ENCODE measurements at regions of chr19 and their contacts with region 1.

Region 1: DNA sequence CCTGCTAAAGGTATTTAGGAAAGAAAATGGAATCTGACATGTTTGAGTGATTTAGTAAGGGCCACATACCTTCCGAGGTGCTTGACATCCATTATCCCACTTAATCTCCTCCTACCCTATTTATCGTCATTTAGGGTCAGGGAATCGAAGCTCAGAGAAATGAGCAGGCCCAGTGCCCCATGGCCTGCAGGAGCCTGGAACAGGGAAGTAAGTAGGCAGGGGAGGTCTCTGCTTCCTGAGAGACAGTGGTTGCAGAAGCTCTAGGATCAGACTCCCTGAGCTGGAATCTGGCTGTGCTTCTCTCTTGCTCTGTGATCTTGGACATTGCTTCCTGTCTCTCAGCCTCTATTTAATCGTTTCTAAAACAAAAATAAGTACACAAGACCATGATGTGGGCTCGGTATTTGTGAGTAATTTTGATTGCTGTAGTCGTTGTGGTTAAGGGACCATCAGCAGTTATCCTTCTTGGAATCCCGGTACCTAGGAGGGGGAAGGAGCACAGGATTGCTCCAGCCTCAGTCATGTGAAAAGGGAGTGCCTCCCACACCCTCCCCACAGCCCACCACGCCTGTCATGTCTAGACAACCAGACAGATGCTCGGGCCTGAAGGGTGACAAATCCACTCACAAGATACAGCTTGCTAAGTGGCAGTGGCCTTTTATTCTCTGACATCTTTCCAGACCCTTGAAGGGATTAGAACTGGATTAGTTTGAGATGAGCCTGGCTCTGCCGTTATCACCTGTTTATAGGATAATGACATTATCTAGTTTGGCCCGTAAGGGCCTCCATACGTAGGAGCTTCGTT is 169.2 kb upstream of the TSHZ3 start:
- DNase-seq: no peak
- H3K4me3 ChIP-seq: no peak overlapping the region
- H3K27ac ChIP-seq: no peak overlapping the region
- H3K4me1 ChIP-seq: no peaks in the 10 kb centered on the region
- H3K27me3 ChIP-seq: no peaks in the 10 kb centered on the region
- CTCF ChIP-seq: no peak

Region 2: DNA sequence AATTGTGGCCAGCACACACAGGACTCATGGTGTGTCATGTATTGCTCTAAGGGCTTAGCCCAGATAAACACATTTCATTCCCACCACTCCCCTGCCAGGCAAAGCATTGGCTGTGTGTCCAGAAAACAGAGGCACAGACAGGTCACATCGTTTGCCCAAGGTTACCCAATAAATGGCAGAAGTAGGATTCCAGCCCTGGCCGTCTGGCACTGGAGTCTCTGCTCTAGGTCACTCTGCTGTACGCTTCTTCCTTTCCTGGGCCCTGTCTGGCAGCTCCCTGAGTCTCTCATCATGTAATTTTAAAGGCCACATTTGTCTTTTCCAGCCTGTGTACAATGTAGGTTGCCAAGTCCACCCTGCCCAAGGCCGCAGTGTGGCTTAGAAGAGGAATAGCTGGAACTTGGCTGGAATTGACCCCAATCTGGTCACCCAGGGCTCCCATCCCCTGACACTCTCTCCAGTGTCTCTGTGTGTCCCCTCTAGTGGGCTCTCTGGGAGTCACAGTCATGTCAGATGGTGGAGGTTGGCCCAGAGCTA is 95.3 kb after region 1 on chr19:
- CTCF ChIA-PET with region 1: no interaction called
- POLR2A ChIA-PET with region 1: no interaction called
- intact Hi-C with region 1: no loop called
- DNase-seq: no peak
- H3K4me3 ChIP-seq: no peak overlapping the region
- H3K27ac ChIP-seq: no peak overlapping the region
- H3K4me1 ChIP-seq: no peaks in the 10 kb centered on the region
- H3K27me3 ChIP-seq: no peaks in the 10 kb centered on the region
- CTCF ChIP-seq: no peak

Region 3: GRCh38 chr19:32350987-32351348 is 832.5 kb after region 1 on chr19:
- CTCF ChIA-PET with region 1: no interaction called
- POLR2A ChIA-PET with region 1: interaction called, 12 read pairs
- intact Hi-C with region 1: no loop called
- DNase-seq: no peak
- H3K4me3 ChIP-seq: no peak overlapping the region
- H3K27ac ChIP-seq: no peak overlapping the region
- H3K4me1 ChIP-seq: peaks cover 13% of the 10 kb centered on the region
- H3K27me3 ChIP-seq: no peaks in the 10 kb centered on the region
- CTCF ChIP-seq: no peak

Measured in A673 (cell line).